Endothelial cell of umbilical vein (primary cell): ENCODE measurements at regions of chr7 and their contacts with region 1.

Region 1: GRCh38 chr7:28096713-28097112 is 83.9 kb downstream of the JAZF1 start:
- DNase-seq: peak; percentile 71
- H3K4me3 ChIP-seq: no peak overlapping the region
- H3K27ac ChIP-seq: no peak overlapping the region
- H3K4me1 ChIP-seq: no peaks in the 10 kb centered on the region
- H3K27me3 ChIP-seq: no peaks in the 10 kb centered on the region
- CTCF ChIP-seq: peak; percentile 71 to 77
- POLR2A ChIP-seq: no peak

Region 2: GRCh38 chr7:27210441-27211083 is 886.2 kb before region 1 on chr7:
- CTCF ChIA-PET with region 1: interaction called, 13 read pairs
- POLR2A ChIA-PET with region 1: no interaction called
- dilution Hi-C with region 1: no loop called
- intact Hi-C with region 1: no loop called
- DNase-seq: no peak
- H3K4me3 ChIP-seq: peak overlapping the region in 1 of 3 experiments; percentile 29
- H3K27ac ChIP-seq: no peak overlapping the region
- H3K4me1 ChIP-seq: peaks cover 15% of the 10 kb centered on the region
- H3K27me3 ChIP-seq: peaks cover 73 to 77% of the 10 kb centered on the region in 2 experiments
- CTCF ChIP-seq: peak; percentile 56 to 82
- POLR2A ChIP-seq: no peak

Region 3: GRCh38 chr7:27774717-27775328 is 321.9 kb before region 1 on chr7:
- CTCF ChIA-PET with region 1: interaction called, 10 read pairs
- POLR2A ChIA-PET with region 1: no interaction called
- dilution Hi-C with region 1: no loop called
- intact Hi-C with region 1: loop called (anchors 10 kb)
- DNase-seq: peak; percentile 59
- H3K4me3 ChIP-seq: no peak overlapping the region
- H3K27ac ChIP-seq: no peak overlapping the region
- H3K4me1 ChIP-seq: no peaks in the 10 kb centered on the region
- H3K27me3 ChIP-seq: no peaks in the 10 kb centered on the region
- CTCF ChIP-seq: peak; percentile 45 to 46
- POLR2A ChIP-seq: no peak

Region 4: GRCh38 chr7:27890205-27890849 is 206.4 kb before region 1 on chr7:
- CTCF ChIA-PET with region 1: no interaction called
- POLR2A ChIA-PET with region 1: no interaction called
- dilution Hi-C with region 1: no loop called
- intact Hi-C with region 1: no loop called
- DNase-seq: no peak
- H3K4me3 ChIP-seq: no peak overlapping the region
- H3K27ac ChIP-seq: no peak overlapping the region
- H3K4me1 ChIP-seq: peaks cover 1% of the 10 kb centered on the region
- H3K27me3 ChIP-seq: no peaks in the 10 kb centered on the region
- CTCF ChIP-seq: no peak
- POLR2A ChIP-seq: no peak

Region 5: GRCh38 chr7:28020302-28020940 is 76.3 kb before region 1 on chr7:
- CTCF ChIA-PET with region 1: interaction called, 10 read pairs
- POLR2A ChIA-PET with region 1: no interaction called
- dilution Hi-C with region 1: no loop called
- intact Hi-C with region 1: loop called (anchors 1 kb)
- DNase-seq: peak; percentile 80
- H3K4me3 ChIP-seq: no peak overlapping the region
- H3K27ac ChIP-seq: no peak overlapping the region
- H3K4me1 ChIP-seq: no peaks in the 10 kb centered on the region
- H3K27me3 ChIP-seq: no peaks in the 10 kb centered on the region
- CTCF ChIP-seq: peak; percentile 70 to 75
- POLR2A ChIP-seq: no peak

Region 6: GRCh38 chr7:28069807-28070206 is 26.9 kb before region 1 on chr7:
- CTCF ChIA-PET with region 1: interaction called, 20 read pairs
- POLR2A ChIA-PET with region 1: no interaction called
- dilution Hi-C with region 1: no loop called
- intact Hi-C with region 1: no loop called
- DNase-seq: no peak
- H3K4me3 ChIP-seq: no peak overlapping the region
- H3K27ac ChIP-seq: no peak overlapping the region
- H3K4me1 ChIP-seq: no peaks in the 10 kb centered on the region
- H3K27me3 ChIP-seq: no peaks in the 10 kb centered on the region
- CTCF ChIP-seq: no peak
- POLR2A ChIP-seq: no peak

Region 7: GRCh38 chr7:28179120-28180030 is 82.7 kb after region 1 on chr7:
- CTCF ChIA-PET with region 1: interaction called, 4 read pairs
- POLR2A ChIA-PET with region 1: no interaction called
- dilution Hi-C with region 1: no loop called
- intact Hi-C with region 1: loop called (anchors 2 kb)
- DNase-seq: peak; percentile 21
- H3K4me3 ChIP-seq: peak overlapping the region; percentile 61 to 97 (median 67)
- H3K27ac ChIP-seq: peak overlapping the region; percentile 13
- H3K4me1 ChIP-seq: peaks cover 12% of the 10 kb centered on the region
- H3K27me3 ChIP-seq: no peaks in the 10 kb centered on the region
- CTCF ChIP-seq: no peak
- POLR2A ChIP-seq: no peak

Region 8: GRCh38 chr7:29113384-29114103 is 1016.8 kb after region 1 on chr7:
- CTCF ChIA-PET with region 1: no interaction called
- POLR2A ChIA-PET with region 1: no interaction called
- dilution Hi-C with region 1: no loop called
- intact Hi-C with region 1: no loop called
- DNase-seq: peak; percentile 46
- H3K4me3 ChIP-seq: no peak overlapping the region
- H3K27ac ChIP-seq: no peak overlapping the region
- H3K4me1 ChIP-seq: peaks cover 16% of the 10 kb centered on the region
- H3K27me3 ChIP-seq: peaks cover 8 to 13% of the 10 kb centered on the region in 2 experiments
- CTCF ChIP-seq: peak; percentile 3 to 42
- POLR2A ChIP-seq: no peak